ENCODE measurements at regions of chr5 and their contacts with region 1.

Region 1: DNA sequence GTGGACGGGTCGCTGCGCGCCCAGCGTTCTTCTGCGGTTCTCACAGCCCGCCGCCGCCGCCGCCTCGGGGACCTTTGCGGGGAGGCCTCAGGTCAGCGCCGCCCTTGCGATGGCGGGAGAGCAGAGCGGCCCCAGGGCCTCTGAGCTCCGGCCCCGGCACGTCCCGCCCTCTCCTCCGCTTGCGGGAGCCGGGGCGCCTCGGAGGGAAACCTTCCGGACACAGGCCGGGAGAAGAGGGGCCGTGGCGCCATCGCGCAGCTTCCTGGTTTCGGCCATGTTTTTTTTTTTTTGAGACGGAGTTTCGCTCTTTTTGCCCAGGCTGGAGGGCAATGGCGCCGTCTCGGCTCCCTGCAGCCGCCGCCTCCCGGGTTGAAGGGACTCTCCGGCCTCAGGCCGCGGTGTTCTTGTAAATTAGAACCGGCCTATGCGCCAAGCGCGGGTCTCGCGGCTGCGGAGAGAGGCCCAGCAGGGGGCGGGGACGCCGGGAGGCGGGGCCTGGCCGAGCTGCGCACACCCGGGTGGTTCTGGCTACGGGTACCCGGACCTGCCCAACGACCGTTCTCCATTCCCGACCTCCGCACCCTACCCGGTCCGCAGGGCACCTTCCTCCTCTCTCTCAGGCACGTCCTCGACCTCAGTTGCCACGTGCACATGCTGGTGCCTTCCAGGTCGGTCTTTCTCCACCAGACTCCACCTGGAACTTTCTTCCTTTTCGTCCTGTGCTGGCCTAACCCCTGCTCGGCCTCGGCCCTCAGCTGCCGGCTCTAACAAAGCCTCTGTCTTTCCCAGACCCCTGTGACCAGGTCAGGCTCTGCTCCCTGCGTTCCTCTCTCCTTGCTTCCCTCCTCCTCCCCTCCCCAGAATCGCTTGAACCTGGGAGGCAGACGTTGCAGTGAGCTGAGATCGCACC is 28.8 kb upstream of the MGAT1 start:
- DNase-seq: peak; percentile 82
- H3K4me3 ChIP-seq: peak overlapping the region; percentile 74
- H3K27ac ChIP-seq: peak overlapping the region; percentile 83
- H3K4me1 ChIP-seq: peaks cover 29% of the 10 kb centered on the region
- CTCF ChIP-seq: peak; percentile 28; the same call in 1 of the 2 replicates

Region 2: DNA sequence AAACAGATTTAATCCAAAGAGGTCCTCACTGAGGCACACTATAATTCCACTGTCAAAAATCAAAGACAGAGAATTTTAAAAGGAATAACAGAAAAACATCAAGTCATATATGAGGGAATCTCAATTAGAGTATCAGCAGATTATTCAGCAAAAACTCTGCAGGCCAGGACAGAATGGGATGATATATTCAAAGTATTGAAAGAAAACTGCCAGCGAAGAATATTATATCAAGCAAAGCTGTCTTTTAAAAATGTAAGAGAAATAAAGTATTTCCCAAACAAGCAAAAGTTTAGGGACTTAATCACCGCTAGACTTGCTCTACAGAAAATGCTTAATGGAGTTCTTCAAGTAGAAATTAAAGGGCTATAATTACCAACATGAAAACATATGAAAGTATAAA is 75.8 kb before region 1 on chr5:
- CTCF ChIA-PET with region 1: no interaction called
- POLR2A ChIA-PET with region 1: no interaction called
- intact Hi-C with region 1: no loop called
- DNase-seq: no peak
- H3K4me3 ChIP-seq: no peak overlapping the region
- H3K27ac ChIP-seq: no peak overlapping the region
- H3K4me1 ChIP-seq: no peaks in the 10 kb centered on the region
- CTCF ChIP-seq: no peak

Region 3: GRCh38 chr5:180790011-180790410 is 41.4 kb before region 1 on chr5:
- CTCF ChIA-PET with region 1: interaction called, 3 read pairs
- POLR2A ChIA-PET with region 1: no interaction called
- intact Hi-C with region 1: loop called (anchors 5 kb)
- DNase-seq: peak; percentile 44
- H3K4me3 ChIP-seq: no peak overlapping the region
- H3K27ac ChIP-seq: no peak overlapping the region
- H3K4me1 ChIP-seq: peaks cover 15% of the 10 kb centered on the region
- CTCF ChIP-seq: peak; percentile 57

Region 4: DNA sequence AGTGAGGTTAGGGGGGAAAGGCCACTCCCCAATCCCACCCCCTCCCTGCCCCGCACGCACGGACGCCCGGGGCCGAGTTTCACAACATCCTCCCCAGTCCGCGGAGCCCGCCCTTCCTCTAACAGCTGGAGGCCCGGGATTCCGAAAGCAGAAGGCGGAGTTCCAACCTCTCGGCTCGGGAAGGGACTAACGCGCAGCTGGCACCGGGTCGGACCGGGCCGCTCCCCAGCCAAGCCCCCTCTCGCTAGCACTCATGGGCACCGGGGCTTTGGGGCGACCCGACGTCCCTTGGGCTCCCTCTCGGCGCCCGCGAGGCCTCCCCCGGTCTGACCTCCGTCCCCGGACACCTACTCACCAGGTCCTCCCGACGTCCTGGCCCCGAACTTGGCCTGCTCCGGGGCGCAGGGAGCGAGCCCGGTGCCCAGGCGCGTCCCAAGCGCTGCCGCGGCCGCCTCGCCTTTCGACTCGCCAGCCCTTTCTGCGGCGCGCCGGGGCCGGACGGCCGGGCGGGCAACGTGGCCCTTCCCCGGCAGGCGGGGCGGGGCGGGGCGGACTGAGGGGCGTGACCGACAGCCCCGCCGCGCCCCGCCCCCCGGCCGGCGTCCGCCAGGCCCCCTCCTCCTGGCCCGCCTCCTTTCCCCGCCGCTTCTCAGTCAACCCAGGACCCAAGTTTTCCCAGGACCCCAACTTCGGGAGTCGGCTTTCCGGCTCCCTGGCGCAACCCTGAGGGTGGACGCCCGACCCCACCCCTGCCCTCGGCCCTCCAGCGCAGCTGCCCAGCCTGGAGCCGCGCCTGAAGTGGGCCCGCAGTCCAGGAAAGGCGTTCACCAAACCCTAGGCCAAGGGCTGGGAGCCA is 28.8 kb before region 1 on chr5 and contains the start of gene MGAT1:
- CTCF ChIA-PET with region 1: interaction called, 3 read pairs
- POLR2A ChIA-PET with region 1: interaction called, 25 read pairs
- intact Hi-C with region 1: loop called (anchors 1 kb)
- DNase-seq: peak; percentile 75
- H3K4me3 ChIP-seq: peak within 1 kb of the TSS; percentile 84
- H3K27ac ChIP-seq: peak within 1 kb of the TSS; percentile 96
- H3K4me1 ChIP-seq: peaks cover 80% of the 10 kb centered on the region
- CTCF ChIP-seq: no peak
- total RNA-seq, gene MGAT1: 65.2 and 75.4 TPM in 2 replicates

Region 5: DNA sequence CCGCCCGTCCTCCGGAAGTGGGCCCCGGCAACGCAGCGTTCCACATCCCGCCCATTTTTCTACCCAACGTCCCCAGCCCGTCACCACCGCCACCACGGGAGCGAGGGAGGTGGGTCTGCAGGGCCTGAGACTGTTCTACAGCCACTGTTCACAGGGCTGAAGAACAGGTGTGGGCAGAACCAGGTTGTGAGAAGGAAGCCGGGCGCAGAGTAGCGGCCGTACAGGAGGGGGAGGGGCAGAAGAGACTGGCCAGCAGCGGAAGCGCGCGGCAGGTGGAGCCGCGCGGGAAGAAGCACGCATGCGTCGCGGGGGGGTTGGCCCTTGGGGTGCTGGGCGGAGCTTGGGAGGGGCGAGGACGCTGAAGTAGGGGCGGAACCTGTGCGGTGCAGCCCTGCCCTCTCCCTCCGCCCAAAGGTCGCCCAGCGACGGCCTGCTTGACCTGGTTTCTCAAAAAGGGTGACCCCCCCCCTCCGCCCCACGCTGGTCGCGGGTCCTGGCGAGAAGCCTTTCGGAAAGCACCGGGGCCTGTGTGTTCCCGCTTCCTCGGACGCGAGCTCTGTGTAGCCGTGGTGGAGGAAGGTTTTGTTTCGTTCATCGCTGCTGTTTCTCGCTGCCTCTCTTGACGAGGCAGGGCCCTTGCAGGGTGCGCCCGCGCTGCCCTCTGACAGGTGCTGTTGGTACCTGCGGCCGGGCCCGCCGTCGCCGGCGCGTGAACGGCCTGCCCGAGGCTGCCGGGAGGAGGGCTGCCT is 21.0 kb before region 1 on chr5:
- CTCF ChIA-PET with region 1: interaction called, 3 read pairs
- POLR2A ChIA-PET with region 1: interaction called, 29 read pairs
- intact Hi-C with region 1: loop called (anchors 2 kb)
- DNase-seq: peak; percentile 96
- H3K4me3 ChIP-seq: peak overlapping the region; percentile 84
- H3K27ac ChIP-seq: peak overlapping the region; percentile 96
- H3K4me1 ChIP-seq: peaks cover 79% of the 10 kb centered on the region
- CTCF ChIP-seq: no peak

Region 6: DNA sequence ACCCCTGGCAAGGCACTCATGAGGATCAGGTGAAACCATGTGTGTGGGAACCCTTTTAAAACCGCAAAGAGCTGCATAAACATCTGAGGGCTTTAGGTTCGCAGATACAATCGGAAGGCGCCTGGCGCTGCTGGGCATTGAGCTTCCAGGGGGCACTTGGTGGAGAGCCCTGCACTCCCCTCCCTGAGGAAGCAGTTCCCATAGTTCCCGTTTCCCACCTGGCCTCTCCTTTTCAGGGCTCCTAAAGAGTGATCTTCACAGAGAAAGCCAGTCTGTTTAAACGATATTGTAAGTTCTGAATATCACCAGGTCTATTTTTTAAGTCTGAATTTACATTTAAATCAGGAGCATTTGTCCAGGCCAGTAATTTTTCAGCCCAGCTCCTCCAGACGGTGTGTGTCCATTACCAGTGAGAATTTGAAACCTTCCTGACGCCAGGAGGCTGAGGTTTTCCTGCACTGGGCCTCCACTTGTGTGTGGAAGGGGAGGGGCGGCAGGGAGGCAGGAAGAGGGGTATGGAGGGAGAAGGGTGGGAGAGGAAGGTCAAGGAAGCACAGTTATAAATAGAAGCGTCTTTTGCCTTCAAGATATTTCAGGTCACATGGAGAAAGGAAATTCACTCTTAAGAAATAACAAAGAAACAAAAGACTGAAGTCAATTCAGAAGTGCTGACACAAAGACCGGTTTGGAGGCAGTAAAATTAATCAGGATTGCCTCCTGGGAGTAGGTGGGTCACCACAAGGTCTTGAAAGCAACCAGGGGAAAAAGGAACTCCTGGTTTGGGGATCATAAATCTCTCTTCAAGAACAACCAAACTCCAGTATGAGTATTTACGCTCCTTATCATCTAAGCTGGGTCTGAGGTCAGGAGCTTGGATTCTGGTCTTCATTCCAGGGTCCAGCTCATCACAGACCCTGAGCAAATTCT is 14.5 kb before region 1 on chr5:
- CTCF ChIA-PET with region 1: interaction called, 9 read pairs
- POLR2A ChIA-PET with region 1: interaction called, 48 read pairs
- intact Hi-C with region 1: loop called (anchors 1 kb)
- DNase-seq: no peak
- H3K4me3 ChIP-seq: peak overlapping the region; percentile 44
- H3K27ac ChIP-seq: peak overlapping the region; percentile 79
- H3K4me1 ChIP-seq: peaks cover 98% of the 10 kb centered on the region
- CTCF ChIP-seq: no peak

Region 7: DNA sequence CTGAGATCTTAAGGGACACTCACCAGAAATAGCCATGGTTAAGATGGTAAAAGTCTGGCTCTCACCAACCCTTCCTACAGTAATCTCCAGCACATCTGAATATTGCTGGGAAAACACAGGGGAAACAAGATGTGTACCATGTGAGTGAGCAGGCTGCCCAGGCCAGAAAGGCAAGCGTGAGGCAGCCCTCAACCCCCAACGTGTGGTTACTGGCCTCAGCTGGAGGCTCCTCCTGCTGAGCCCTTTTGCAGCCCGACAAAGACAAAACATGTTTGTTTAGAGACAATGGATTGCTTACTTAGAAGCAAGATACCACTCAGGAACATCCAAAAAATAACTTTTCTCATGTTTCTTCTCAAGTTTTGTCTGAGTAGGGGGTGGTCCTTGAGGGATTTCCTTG is 13.0 kb after region 1 on chr5:
- CTCF ChIA-PET with region 1: no interaction called
- POLR2A ChIA-PET with region 1: interaction called, 10 read pairs
- intact Hi-C with region 1: no loop called
- DNase-seq: no peak
- H3K4me3 ChIP-seq: no peak overlapping the region
- H3K27ac ChIP-seq: no peak overlapping the region
- H3K4me1 ChIP-seq: peaks cover 3% of the 10 kb centered on the region
- CTCF ChIP-seq: no peak

Region 8: DNA sequence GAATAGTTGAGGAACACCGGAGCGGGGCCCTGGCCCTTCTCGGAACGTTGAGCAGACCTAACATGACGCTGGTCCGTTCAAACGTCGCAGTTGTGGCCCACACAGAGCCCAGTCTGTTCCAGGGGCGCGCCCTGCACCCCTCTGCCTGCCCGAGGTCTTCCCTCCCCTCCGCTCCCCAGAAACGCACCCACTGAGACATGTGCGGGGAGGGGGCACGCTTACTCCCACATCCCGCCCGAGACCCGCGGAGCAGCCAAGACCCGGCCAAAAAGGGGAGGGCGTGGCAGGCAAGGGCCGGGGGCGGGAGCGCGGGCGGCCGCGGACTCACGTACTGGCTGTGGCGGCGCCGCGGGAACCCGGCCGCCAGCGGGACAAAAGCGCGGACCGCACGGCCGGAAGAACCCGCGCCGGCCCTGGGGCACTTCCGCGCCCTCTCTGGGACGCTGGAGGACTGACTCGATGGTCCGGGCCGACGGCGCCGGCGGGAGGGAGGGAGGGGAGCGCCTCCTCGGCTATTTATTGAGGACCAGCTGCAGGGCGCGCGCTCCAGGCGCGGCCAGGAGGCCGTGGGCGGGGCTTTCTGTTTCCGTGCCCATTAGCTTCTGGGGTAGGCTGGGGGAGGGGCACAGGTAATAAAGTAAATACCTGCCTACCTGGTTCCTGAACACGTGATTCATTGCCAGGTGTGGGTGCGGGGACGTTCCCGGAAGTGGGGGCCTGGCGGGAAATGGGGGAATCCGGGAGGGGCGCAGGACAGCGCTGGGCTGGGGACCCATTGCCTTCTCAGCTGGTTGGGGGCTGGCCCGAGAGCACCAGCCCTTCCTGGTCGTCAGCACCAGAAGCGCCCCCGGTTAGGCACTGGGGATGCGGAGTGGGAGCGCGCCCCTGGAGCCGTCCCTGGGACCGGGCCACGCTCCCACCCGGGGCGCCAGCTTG is 29.8 kb after region 1 on chr5 and contains the start of gene ZFP62:
- CTCF ChIA-PET with region 1: no interaction called
- POLR2A ChIA-PET with region 1: interaction called, 24 read pairs
- intact Hi-C with region 1: loop called (anchors 1 kb)
- DNase-seq: peak; percentile 96
- H3K4me3 ChIP-seq: peak within 1 kb of the TSS; percentile 96
- H3K27ac ChIP-seq: peak within 1 kb of the TSS; percentile 95
- H3K4me1 ChIP-seq: peaks cover 18% of the 10 kb centered on the region
- CTCF ChIP-seq: no peak
- total RNA-seq, gene ZFP62: 58.4 and 59.0 TPM in 2 replicates

Region 9: GRCh38 chr5:180898621-180899246 is 67.3 kb after region 1 on chr5 and contains the start of gene BTNL8:
- CTCF ChIA-PET with region 1: no interaction called
- POLR2A ChIA-PET with region 1: no interaction called
- intact Hi-C with region 1: no loop called
- DNase-seq: no peak
- H3K4me3 ChIP-seq: no peak within 1 kb of the TSS
- H3K27ac ChIP-seq: no peak within 1 kb of the TSS
- H3K4me1 ChIP-seq: peaks cover 5% of the 10 kb centered on the region
- CTCF ChIP-seq: no peak
- total RNA-seq, gene BTNL8: not detected in 2 replicates